Endothelial cell of umbilical vein (primary cell): ENCODE measurements at regions of chr11 and their contacts with region 1.

Region 1: DNA sequence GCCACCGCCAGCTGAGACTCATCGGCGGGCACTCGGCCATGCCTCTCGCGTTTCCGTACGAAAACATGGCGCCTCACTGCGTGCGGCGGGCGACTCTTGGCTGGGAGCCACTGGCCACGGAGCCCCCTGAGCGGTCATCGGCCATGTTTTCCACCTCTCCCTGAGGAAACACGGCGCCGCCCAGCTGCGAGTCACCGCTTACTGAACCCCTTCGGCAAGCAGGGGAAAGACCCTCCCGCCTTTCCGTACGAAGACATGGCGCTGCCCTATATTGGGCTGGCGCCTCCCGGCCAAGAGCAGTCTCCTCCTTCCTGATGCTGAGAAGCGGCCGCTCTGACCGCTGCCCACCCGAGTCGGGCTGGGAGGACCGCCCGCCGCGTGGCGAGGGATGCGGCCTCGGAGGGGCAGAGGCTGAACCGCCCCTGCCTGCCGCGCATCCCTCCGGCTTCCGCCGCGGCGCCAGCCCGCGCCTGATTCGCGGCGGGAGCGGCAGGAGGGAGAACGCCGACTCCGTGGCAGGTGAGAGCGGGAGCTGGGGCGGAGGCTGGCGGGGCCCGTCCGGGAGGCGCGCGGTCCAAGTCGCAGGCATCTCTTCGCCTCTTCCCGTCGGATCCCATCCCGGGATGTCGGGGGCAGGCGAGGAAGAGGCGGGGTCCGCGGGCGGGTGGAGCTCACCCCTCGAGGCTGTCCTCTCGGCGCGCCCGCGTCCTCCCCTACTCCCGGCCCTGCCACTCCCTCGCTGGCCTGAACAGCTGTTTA is at the start of gene TCP11L1:
- DNase-seq: peak; percentile 95
- H3K4me3 ChIP-seq: peak within 1 kb of the TSS; percentile 45 to 65 (median 57)
- H3K27ac ChIP-seq: peak within 1 kb of the TSS; percentile 79
- H3K4me1 ChIP-seq: peaks cover 12% of the 10 kb centered on the region
- H3K27me3 ChIP-seq: no peaks in the 10 kb centered on the region
- CTCF ChIP-seq: no peak
- POLR2A ChIP-seq: peak; percentile 73
- total RNA-seq, gene TCP11L1: 18.1 and 20.0 TPM in 2 replicates

Region 2: GRCh38 chr11:32893343-32894148 is 145.9 kb before region 1 on chr11:
- CTCF ChIA-PET with region 1: no interaction called
- POLR2A ChIA-PET with region 1: interaction called, 4 read pairs
- dilution Hi-C with region 1: no loop called
- intact Hi-C with region 1: loop called (anchors 1 kb)
- DNase-seq: peak; percentile 56
- H3K4me3 ChIP-seq: peak overlapping the region; percentile 82 to 98 (median 93)
- H3K27ac ChIP-seq: peak overlapping the region; percentile 89
- H3K4me1 ChIP-seq: peaks cover 13% of the 10 kb centered on the region
- H3K27me3 ChIP-seq: no peaks in the 10 kb centered on the region
- CTCF ChIP-seq: peak; percentile 45 to 55
- POLR2A ChIP-seq: no peak